Activated naive CD4-positive, alpha-beta T cell treated with anti-CD3 and anti-CD28 coated beads for 36 hours (primary cell): ENCODE measurements at regions of chrX and their contacts with region 1.

Region 1: DNA sequence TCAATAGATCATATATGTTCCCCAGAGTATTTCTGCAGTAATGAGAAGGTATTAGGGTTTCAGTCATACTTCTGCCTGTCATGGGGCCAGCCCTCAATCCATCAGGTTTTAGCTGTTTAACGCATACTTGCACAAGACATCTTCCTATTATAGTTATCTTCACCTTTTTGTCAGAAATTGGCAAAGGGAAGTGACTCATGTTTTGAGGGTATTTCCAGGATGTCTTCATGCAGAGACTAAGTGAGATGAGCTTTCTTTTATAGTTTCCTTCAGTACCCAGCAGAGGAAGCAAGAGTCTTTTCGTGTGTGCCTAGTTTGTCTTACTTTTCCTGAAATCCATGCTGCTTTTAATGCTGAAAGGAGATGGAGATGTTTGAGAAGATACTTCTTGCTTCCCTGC is 9.5 kb downstream of the CSTF2 start:
- DNase-seq: peak; percentile 56
- H3K4me3 Mint-ChIP-seq: peak overlapping the region; percentile 36
- H3K27ac Mint-ChIP-seq: peak overlapping the region; percentile 97
- H3K4me1 Mint-ChIP-seq: peaks cover 39% of the 10 kb centered on the region
- H3K27me3 Mint-ChIP-seq: no peaks in the 10 kb centered on the region

Region 2: DNA sequence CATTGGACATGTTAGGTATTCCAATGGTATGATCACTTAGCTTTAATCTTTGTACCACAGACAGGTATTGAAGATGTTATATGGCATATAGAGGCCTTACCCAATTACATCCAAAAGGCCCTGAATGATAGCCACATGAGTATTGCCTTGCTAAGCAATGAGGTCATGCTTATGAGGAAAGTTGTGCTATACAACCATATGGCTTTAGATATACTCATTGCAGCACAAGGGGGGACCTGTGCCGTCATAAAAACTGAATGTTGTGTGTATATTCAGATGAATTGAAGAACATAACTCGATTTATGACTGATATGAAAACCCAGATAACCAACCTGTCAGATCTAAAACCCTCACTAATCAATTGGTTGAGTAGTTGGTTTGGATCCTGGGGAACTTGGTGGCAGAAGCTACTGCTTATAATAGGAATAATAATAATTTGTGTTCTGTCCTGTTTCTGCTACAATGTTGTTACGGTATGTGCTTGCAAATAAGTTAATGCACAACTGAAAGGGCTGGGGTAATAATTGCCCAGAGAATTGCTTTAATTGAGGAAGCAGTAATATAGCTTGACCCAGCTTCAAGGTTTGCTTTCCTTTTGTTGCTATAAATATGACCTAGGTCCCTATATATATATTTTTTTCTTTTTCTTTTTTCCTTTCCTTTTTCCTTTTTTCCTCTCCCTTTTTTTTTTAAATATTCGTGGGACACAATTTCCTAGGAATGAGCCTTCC is 31.1 kb before region 1 on chrX:
- CTCF ChIA-PET with region 1: no interaction called
- intact Hi-C with region 1: no loop called
- DNase-seq: no peak
- H3K4me3 Mint-ChIP-seq: no peak overlapping the region
- H3K27ac Mint-ChIP-seq: no peak overlapping the region
- H3K4me1 Mint-ChIP-seq: no peaks in the 10 kb centered on the region
- H3K27me3 Mint-ChIP-seq: no peaks in the 10 kb centered on the region

Region 3: GRCh38 chrX:100850317-100850716 is 20.6 kb after region 1 on chrX:
- CTCF ChIA-PET with region 1: no interaction called
- intact Hi-C with region 1: no loop called
- DNase-seq: no peak
- H3K4me3 Mint-ChIP-seq: no peak overlapping the region
- H3K27ac Mint-ChIP-seq: no peak overlapping the region
- H3K4me1 Mint-ChIP-seq: peaks cover under 1% of the 10 kb centered on the region
- H3K27me3 Mint-ChIP-seq: no peaks in the 10 kb centered on the region

Region 4: GRCh38 chrX:100928660-100929613 is 99.2 kb after region 1 on chrX and contains the start of gene XKRX:
- CTCF ChIA-PET with region 1: no interaction called
- intact Hi-C with region 1: loop called (anchors 2 kb)
- DNase-seq: peak; percentile 74
- H3K4me3 Mint-ChIP-seq: peak within 1 kb of the TSS; percentile 82
- H3K27ac Mint-ChIP-seq: no peak within 1 kb of the TSS
- H3K4me1 Mint-ChIP-seq: peaks cover 52% of the 10 kb centered on the region
- H3K27me3 Mint-ChIP-seq: no peaks in the 10 kb centered on the region
- total RNA-seq, gene XKRX: 0.64 to 0.72 TPM

Region 5: DNA sequence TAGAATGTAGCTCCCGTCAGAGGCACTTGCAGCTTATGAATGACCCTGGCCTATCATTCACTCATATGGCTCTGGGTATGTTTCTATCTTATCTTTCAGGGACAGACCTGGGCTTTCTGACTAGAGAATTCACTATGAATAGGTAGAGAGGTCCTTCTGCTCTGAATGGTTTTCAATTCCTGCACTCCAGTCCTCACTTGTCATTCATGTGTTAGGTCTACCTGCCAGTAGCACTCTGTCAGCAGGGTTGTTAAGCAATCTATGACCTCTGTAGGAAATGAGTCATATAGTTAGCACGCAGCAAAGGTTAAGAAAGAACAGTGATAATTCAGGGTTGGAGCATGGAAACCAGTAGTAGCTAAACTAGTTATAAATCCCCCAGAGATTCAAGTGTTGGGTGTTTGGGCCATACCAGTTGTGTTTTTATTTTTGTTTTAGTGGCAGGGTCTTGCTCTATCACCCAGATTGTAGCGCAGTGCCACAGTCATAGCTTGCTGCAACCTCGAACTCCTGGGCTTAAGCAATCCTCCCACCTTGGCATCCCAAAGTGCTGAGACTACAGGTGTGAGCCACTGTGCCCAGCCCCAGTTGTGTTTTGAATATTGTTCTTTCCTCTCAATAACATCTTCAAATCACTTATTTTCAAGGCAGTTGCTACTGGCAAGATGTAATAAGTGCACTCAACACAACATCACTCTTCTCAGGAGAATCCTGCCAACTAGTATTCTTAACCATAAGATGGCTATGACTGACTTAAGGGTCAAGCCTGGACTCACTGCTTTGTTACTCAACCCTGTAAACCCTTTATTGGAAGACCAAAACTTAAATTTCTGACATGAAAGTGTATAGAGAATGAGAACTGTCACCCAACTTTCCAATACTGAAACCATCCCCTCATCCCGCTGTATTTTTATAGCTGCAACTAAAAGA is 164.9 kb after region 1 on chrX:
- CTCF ChIA-PET with region 1: no interaction called
- intact Hi-C with region 1: loop called (anchors 1 kb)
- DNase-seq: peak; percentile 24
- H3K4me3 Mint-ChIP-seq: no peak overlapping the region
- H3K27ac Mint-ChIP-seq: peak overlapping the region; percentile 68
- H3K4me1 Mint-ChIP-seq: peaks cover 17% of the 10 kb centered on the region
- H3K27me3 Mint-ChIP-seq: no peaks in the 10 kb centered on the region

Region 6: GRCh38 chrX:101206471-101206870 is 376.7 kb after region 1 on chrX:
- CTCF ChIA-PET with region 1: no interaction called
- intact Hi-C with region 1: loop called (anchors 2 kb)
- DNase-seq: peak; percentile 16
- H3K4me3 Mint-ChIP-seq: no peak overlapping the region
- H3K27ac Mint-ChIP-seq: no peak overlapping the region
- H3K4me1 Mint-ChIP-seq: peaks cover 18% of the 10 kb centered on the region
- H3K27me3 Mint-ChIP-seq: no peaks in the 10 kb centered on the region

Region 7: GRCh38 chrX:101287402-101287801 is 457.7 kb after region 1 on chrX:
- CTCF ChIA-PET with region 1: no interaction called
- intact Hi-C with region 1: loop called (anchors 5 kb)
- DNase-seq: peak; percentile 6
- H3K4me3 Mint-ChIP-seq: no peak overlapping the region
- H3K27ac Mint-ChIP-seq: no peak overlapping the region
- H3K4me1 Mint-ChIP-seq: no peaks in the 10 kb centered on the region
- H3K27me3 Mint-ChIP-seq: peaks cover 1% of the 10 kb centered on the region

Region 8: GRCh38 chrX:101390664-101391525 is 561.2 kb after region 1 on chrX and contains the start of gene RPL36A:
- CTCF ChIA-PET with region 1: no interaction called
- intact Hi-C with region 1: loop called (anchors 5 kb)
- DNase-seq: peak; percentile 88
- H3K4me3 Mint-ChIP-seq: peak within 1 kb of the TSS; percentile 93
- H3K27ac Mint-ChIP-seq: peak within 1 kb of the TSS; percentile 94
- H3K4me1 Mint-ChIP-seq: peaks cover 18% of the 10 kb centered on the region
- H3K27me3 Mint-ChIP-seq: no peaks in the 10 kb centered on the region
- total RNA-seq, gene RPL36A: 446 to 500 TPM